ENCODE measurements at regions of chr19 and their contacts with region 1.

Region 1: DNA sequence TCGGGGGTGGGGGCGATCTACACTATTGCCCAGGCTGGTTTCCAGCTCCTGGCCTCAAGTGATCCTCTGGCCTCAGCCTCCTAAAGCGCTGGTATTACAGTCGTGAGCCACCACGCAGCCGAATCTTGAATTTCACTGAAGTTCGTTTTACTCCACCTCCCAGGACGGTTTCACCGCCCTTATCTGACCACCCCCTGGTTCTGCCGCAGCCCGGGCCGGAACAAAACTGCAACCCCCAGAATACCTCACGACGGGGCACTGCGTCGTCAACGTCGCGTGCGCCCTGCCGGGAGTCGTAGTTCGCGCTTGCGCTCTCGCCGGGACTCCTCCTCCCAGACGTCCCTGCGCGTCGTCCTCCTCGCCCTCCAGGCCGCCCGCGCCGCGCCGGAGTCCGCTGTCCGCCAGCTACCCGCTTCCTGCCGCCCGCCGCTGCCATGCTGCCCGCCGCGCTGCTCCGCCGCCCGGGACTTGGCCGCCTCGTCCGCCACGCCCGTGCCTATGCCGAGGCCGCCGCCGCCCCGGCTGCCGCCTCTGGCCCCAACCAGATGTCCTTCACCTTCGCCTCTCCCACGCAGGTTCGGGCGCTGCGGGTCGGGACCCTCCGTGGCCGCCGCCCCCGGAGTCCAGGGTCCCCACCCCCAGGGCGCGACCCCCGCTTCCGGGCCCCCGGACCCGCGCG is at the start of gene ATP5F1D:
- DNase-seq: peak; percentile 94
- ATAC-seq: peak; percentile 70
- H3K4me3 ChIP-seq: peak within 1 kb of the TSS; percentile 28 to 92 (median 57)
- H3K4me3 Mint-ChIP-seq: peak within 1 kb of the TSS; percentile 88
- H3K27ac ChIP-seq: peak within 1 kb of the TSS; percentile 24 to 65
- H3K27ac Mint-ChIP-seq: peak within 1 kb of the TSS; percentile 85
- H3K4me1 ChIP-seq: peaks cover 44 to 70% of the 10 kb centered on the region in 2 donors
- H3K4me1 Mint-ChIP-seq: peaks cover 40% of the 10 kb centered on the region
- H3K27me3 ChIP-seq: peaks cover 0 to 11% (median 4%) of the 10 kb centered on the region in 4 experiments
- H3K27me3 Mint-ChIP-seq: peaks cover 8% of the 10 kb centered on the region
- CTCF ChIP-seq: no peak
- total RNA-seq, gene ATP5F1D: 131 and 150 TPM in 2 replicates

Region 2: DNA sequence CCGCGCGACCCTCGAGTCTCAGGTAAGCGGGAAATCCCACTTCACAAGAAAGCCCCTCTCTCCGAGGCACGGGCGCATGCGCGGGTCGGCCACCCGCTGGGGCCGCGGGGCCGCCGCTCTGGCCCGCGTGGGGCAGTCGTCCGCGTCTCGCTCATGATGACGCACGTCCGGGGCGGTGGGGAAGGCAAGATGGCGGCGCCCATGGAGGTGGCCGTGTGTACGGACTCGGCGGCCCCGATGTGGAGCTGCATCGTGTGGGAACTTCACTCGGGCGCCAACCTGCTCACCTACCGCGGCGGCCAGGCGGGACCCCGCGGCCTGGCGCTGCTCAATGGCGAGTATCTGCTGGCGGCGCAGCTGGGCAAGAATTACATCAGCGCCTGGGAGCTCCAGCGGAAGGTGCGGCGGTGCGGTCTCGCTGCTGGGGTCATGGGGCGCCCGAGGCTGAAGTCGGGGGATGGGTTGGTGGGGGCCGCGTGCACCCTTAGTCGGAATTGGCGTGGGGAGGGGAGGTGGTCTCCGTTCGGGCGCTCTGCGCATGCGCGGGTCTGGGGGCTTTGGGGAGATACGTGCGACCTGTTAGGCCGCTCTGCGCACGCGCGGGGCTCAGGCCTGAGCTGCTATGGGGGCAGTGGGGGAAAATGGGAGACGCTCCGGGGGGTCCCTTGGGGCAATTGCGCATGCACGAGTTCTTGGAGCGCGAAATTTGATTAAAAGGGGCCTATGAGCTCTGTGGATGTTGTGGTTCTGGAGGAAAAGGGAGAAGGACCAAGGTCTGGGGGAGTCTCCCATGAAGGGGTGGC is 257.2 kb before region 1 on chr19 and contains the start of gene WDR18:
- CTCF ChIA-PET with region 1: interaction called, 3 read pairs
- POLR2A ChIA-PET with region 1: no interaction called
- intact Hi-C with region 1: loop called (anchors 2 kb)
- DNase-seq: peak; percentile 94
- ATAC-seq: peak; percentile 90
- H3K4me3 ChIP-seq: peak within 1 kb of the TSS; percentile 40 to 99 (median 88)
- H3K4me3 Mint-ChIP-seq: peak within 1 kb of the TSS; percentile 95
- H3K27ac ChIP-seq: peak within 1 kb of the TSS; percentile 88 to 90
- H3K27ac Mint-ChIP-seq: peak within 1 kb of the TSS; percentile 93
- H3K4me1 ChIP-seq: peaks cover 19 to 27% of the 10 kb centered on the region in 2 donors
- H3K4me1 Mint-ChIP-seq: peaks cover 16% of the 10 kb centered on the region
- H3K27me3 ChIP-seq: no peaks in the 10 kb centered on the region
- H3K27me3 Mint-ChIP-seq: no peaks in the 10 kb centered on the region
- CTCF ChIP-seq: no peak
- total RNA-seq, gene WDR18: 50.5 and 60.5 TPM in 2 replicates

Region 3: GRCh38 chr19:1113033-1113985 is 128.2 kb before region 1 on chr19:
- CTCF ChIA-PET with region 1: interaction called, 10 read pairs
- POLR2A ChIA-PET with region 1: no interaction called
- intact Hi-C with region 1: loop called (anchors 1 kb)
- DNase-seq: peak; percentile 90
- ATAC-seq: peak; percentile 98
- H3K4me3 ChIP-seq: no peak overlapping the region
- H3K4me3 Mint-ChIP-seq: no peak overlapping the region
- H3K27ac ChIP-seq: no peak overlapping the region
- H3K27ac Mint-ChIP-seq: peak overlapping the region; percentile 53
- H3K4me1 ChIP-seq: peaks cover 6 to 12% of the 10 kb centered on the region in 2 donors
- H3K4me1 Mint-ChIP-seq: peaks cover 5% of the 10 kb centered on the region
- H3K27me3 ChIP-seq: no peaks in the 10 kb centered on the region
- H3K27me3 Mint-ChIP-seq: no peaks in the 10 kb centered on the region
- CTCF ChIP-seq: peak; percentile 92

Region 4: GRCh38 chr19:1260636-1261537 is 19.3 kb after region 1 on chr19:
- CTCF ChIA-PET with region 1: interaction called, 658 read pairs
- POLR2A ChIA-PET with region 1: interaction called, 402 read pairs
- intact Hi-C with region 1: loop called (anchors 1 kb)
- DNase-seq: peak; percentile 98
- ATAC-seq: peak; percentile 59
- H3K4me3 ChIP-seq: peak overlapping the region; percentile 61 to 95 (median 81)
- H3K4me3 Mint-ChIP-seq: peak overlapping the region; percentile 97
- H3K27ac ChIP-seq: peak overlapping the region; percentile 99 to 100
- H3K27ac Mint-ChIP-seq: peak overlapping the region; percentile 99
- H3K4me1 ChIP-seq: peaks cover 68 to 91% of the 10 kb centered on the region in 2 donors
- H3K4me1 Mint-ChIP-seq: peaks cover 78% of the 10 kb centered on the region
- H3K27me3 ChIP-seq: no peaks in the 10 kb centered on the region
- H3K27me3 Mint-ChIP-seq: no peaks in the 10 kb centered on the region
- CTCF ChIP-seq: no peak

Region 5: DNA sequence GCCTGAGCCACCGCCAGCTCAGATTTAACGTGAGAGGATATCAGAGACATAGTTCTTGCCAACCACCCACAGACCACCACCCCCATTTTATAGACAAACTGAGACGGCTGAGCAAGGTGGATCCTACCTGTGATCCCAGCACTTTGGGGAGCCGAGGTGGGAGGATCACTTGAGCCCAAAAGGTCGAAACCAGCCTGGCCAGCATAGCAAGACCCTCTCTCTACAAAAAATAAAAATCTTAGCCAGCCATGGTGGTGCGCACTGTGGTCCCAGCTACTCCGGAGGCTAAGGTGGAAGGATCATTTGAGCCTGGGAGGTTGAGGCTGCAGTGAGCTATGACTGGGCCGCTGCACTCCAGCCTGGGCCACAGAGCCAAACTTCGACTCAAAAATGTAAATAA is 111.6 kb after region 1 on chr19:
- CTCF ChIA-PET with region 1: no interaction called
- POLR2A ChIA-PET with region 1: no interaction called
- intact Hi-C with region 1: no loop called
- DNase-seq: no peak
- ATAC-seq: no peak
- H3K4me3 ChIP-seq: no peak overlapping the region
- H3K4me3 Mint-ChIP-seq: peak overlapping the region; percentile 41
- H3K27ac ChIP-seq: no peak overlapping the region
- H3K27ac Mint-ChIP-seq: no peak overlapping the region
- H3K4me1 ChIP-seq: peaks cover 9 to 18% of the 10 kb centered on the region in 2 donors
- H3K4me1 Mint-ChIP-seq: peaks cover 16% of the 10 kb centered on the region
- H3K27me3 ChIP-seq: no peaks in the 10 kb centered on the region
- H3K27me3 Mint-ChIP-seq: no peaks in the 10 kb centered on the region
- CTCF ChIP-seq: no peak

Region 6: DNA sequence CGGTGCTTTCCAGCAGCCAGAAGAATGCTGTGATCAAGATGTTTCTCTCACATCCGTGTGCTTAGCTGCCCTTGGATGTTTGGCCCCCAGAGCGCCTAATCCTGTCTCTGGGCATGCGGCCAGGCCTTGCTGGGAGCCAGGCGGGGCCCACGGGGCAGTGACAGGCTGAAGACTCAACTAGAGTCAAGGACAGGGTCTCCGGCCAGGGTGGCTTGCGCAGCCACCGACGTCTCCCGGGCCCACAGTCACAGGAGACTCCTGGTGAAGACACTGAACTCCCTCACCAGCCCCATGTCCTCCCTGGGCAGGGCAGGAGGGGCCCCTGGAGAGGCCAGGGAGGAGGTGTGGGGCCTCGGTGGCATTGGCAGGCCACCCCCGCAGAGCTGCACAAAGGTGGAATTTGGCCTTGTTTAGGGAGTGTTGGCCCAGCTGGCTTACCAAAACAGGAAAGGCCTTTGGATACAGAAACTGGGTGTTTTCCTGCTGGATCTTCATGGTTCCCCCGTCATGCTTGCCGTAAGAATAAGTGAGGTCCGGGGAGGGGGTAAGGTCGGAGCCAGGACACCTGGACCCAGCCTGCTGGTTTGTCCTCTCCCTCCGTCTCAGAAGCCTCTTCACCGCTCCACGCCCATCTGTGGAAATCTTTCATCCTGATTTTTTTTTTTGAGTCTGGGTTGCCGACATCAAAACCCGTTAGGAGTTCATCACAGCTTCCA is 132.1 kb after region 1 on chr19:
- CTCF ChIA-PET with region 1: interaction called, 32 read pairs
- POLR2A ChIA-PET with region 1: no interaction called
- intact Hi-C with region 1: loop called (anchors 1 kb)
- DNase-seq: no peak
- ATAC-seq: no peak
- H3K4me3 ChIP-seq: no peak overlapping the region
- H3K4me3 Mint-ChIP-seq: no peak overlapping the region
- H3K27ac ChIP-seq: no peak overlapping the region
- H3K27ac Mint-ChIP-seq: no peak overlapping the region
- H3K4me1 ChIP-seq: no peaks in the 10 kb centered on the region
- H3K4me1 Mint-ChIP-seq: no peaks in the 10 kb centered on the region
- H3K27me3 ChIP-seq: no peaks in the 10 kb centered on the region
- H3K27me3 Mint-ChIP-seq: no peaks in the 10 kb centered on the region
- CTCF ChIP-seq: no peak